SK-N-SH (cell line): ENCODE measurements at regions of chr18 and their contacts with region 1.

Region 1: DNA sequence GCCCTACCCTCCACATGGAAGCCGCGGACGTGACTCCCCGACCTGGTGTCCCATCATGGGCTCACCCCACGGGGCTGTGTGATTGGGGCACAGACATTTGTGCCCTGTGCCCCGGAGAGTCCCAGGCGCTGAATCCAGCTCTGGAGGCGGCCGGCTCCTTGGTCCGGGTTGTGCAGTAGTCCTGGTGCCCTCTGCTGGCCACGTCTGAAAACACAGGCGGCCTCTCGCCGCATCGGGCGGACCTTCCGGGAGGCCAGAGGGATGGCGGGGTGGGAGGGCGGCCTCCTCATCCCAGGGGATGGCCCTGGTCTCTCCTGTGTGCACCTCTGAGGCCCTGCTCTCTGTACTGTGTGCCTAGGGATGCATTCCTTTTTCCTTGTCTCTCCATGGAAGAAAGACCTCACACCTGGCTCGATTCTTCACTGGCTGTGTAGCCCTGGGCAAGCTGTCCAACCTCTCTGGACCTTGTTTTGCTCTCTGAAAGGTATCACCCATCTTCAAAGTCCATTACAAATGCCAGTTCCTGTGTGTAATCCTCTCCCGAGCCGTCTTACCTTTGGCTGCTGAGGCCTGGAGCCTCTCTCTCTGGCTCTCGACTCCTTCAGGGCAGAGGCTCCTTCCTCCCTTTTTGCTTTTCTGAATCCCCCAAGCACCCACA is 27.6 kb downstream of the CELF4 start:
- DNase-seq: peak; percentile 91
- H3K4me3 ChIP-seq: no peak overlapping the region; a peak in 1 of 4 replicates
- H3K27ac ChIP-seq: no peak overlapping the region
- H3K4me1 ChIP-seq: peaks cover 0 to 52% of the 10 kb centered on the region in 2 experiments; a peak in 2 of 4 replicates
- H3K27me3 ChIP-seq: no peaks in the 10 kb centered on the region
- CTCF ChIP-seq: peak; percentile 78
- EP300 ChIP-seq: no peak
- RAD21 ChIP-seq: peak; percentile 93

Region 2: DNA sequence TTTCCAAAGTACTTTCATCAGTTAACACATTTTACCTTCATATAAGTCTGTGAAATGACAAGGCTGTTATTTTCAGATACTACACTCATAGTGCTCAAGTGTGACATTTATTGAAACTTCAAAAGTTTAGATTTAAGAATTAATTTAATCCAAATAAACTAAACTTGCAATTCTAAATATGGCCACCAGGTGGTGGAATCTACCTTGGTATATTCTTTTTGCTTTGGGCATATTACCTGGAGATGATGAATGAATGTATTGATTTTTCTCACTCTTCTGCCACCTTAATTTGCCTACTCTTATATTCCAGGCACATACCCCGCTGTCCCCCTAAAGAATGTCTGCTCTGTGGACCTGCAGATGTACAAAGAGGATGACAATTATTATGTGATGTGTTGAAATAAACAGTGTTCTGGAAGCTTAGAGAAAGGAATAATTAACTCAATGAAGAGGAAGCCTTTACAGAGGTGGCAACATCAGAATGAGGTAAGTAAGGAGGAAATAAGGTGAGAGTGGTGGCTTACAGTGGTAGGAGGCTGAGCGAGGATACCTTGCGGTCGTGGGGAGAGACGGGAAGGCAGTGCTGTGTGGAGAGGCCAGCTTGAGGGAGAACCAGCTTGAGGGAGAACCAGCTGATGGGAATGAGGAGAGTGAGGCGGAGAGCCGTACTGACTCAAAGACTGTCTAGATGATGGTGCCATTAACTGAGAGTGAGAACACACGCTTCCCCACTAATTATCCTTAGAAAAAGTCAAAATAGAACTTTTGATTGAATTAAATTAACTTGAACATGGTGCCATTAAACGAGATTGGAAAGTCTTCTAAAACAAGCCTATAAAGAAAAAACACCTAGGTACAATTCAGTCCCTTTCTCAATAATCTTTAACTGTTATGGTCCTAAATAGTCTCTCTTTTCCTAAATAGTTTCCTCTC is 151.9 kb before region 1 on chr18:
- CTCF ChIA-PET with region 1: interaction called, 12 read pairs
- POLR2A ChIA-PET with region 1: no interaction called
- DNase-seq: peak; percentile 52
- H3K4me3 ChIP-seq: no peak overlapping the region; a peak in 1 of 4 replicates
- H3K27ac ChIP-seq: no peak overlapping the region
- H3K4me1 ChIP-seq: peaks cover 0 to 26% of the 10 kb centered on the region in 2 experiments; a peak in 1 of 4 replicates
- H3K27me3 ChIP-seq: no peaks in the 10 kb centered on the region
- CTCF ChIP-seq: peak; percentile 72
- EP300 ChIP-seq: no peak
- RAD21 ChIP-seq: peak; percentile 79

Region 3: GRCh38 chr18:37450434-37451132 is 87.4 kb before region 1 on chr18:
- CTCF ChIA-PET with region 1: interaction called, 298 read pairs
- POLR2A ChIA-PET with region 1: no interaction called
- DNase-seq: peak; percentile 81
- H3K4me3 ChIP-seq: no peak overlapping the region
- H3K27ac ChIP-seq: peak overlapping the region in 1 of 2 experiments; percentile 85; a peak in 2 of 4 replicates
- H3K4me1 ChIP-seq: peaks cover 0 to 77% of the 10 kb centered on the region in 2 experiments; a peak in 2 of 4 replicates
- H3K27me3 ChIP-seq: no peaks in the 10 kb centered on the region
- CTCF ChIP-seq: no peak
- EP300 ChIP-seq: peak in 1 of 2 experiments; percentile 46; a peak in 1 of 4 replicates
- RAD21 ChIP-seq: no peak; the same call in 1 of the 2 replicates

Region 4: GRCh38 chr18:37516361-37516853 is 21.6 kb before region 1 on chr18:
- CTCF ChIA-PET with region 1: interaction called, 32 read pairs
- POLR2A ChIA-PET with region 1: interaction called, 3 read pairs
- DNase-seq: peak; percentile 77
- H3K4me3 ChIP-seq: no peak overlapping the region
- H3K27ac ChIP-seq: peak overlapping the region in 1 of 2 experiments; percentile 93; a peak in 2 of 4 replicates
- H3K4me1 ChIP-seq: peaks cover 0 to 65% of the 10 kb centered on the region in 2 experiments; a peak in 2 of 4 replicates
- H3K27me3 ChIP-seq: no peaks in the 10 kb centered on the region
- CTCF ChIP-seq: no peak
- EP300 ChIP-seq: peak in 1 of 2 experiments; percentile 88; a peak in 2 of 4 replicates
- RAD21 ChIP-seq: no peak

Region 5: DNA sequence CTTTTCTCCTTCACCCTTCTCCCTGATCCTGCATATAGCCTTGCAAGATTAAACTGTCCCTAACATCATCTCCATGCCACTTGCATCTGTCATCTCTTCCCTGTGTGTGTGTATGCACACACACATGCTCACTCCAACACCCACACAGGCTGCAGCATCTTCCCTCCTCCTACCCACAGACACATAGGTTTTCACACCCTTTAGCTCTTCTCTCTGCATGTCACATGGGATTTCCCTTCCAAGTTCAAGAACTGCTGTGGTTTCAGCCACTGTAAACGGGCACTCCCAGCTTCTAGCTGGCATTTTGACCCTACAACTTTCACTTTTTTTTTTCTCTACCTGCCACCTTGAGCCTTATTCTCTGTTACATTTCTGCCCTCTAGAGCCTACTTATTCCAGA is 21.2 kb after region 1 on chr18:
- CTCF ChIA-PET with region 1: interaction called, 15 read pairs
- POLR2A ChIA-PET with region 1: interaction called, 3 read pairs
- DNase-seq: no peak
- H3K4me3 ChIP-seq: no peak overlapping the region
- H3K27ac ChIP-seq: no peak overlapping the region
- H3K4me1 ChIP-seq: no peaks in the 10 kb centered on the region; a peak in 2 of 4 replicates
- H3K27me3 ChIP-seq: no peaks in the 10 kb centered on the region
- CTCF ChIP-seq: no peak
- EP300 ChIP-seq: no peak
- RAD21 ChIP-seq: no peak